ENCODE measurements at regions of chrX and their contacts with region 1.

Region 1: GRCh38 chrX:42017971-42018370 is 94.6 kb upstream of the CASK start:
- DNase-seq: no peak
- H3K4me3 ChIP-seq: no peak overlapping the region
- H3K4me3 Mint-ChIP-seq: no peak overlapping the region
- H3K27ac Mint-ChIP-seq: no peak overlapping the region
- H3K4me1 ChIP-seq: peaks cover 28% of the 10 kb centered on the region
- H3K4me1 Mint-ChIP-seq: peaks cover 11% of the 10 kb centered on the region
- H3K27me3 ChIP-seq: no peaks in the 10 kb centered on the region
- H3K27me3 Mint-ChIP-seq: no peaks in the 10 kb centered on the region
- CTCF ChIP-seq: no peak

Region 2: DNA sequence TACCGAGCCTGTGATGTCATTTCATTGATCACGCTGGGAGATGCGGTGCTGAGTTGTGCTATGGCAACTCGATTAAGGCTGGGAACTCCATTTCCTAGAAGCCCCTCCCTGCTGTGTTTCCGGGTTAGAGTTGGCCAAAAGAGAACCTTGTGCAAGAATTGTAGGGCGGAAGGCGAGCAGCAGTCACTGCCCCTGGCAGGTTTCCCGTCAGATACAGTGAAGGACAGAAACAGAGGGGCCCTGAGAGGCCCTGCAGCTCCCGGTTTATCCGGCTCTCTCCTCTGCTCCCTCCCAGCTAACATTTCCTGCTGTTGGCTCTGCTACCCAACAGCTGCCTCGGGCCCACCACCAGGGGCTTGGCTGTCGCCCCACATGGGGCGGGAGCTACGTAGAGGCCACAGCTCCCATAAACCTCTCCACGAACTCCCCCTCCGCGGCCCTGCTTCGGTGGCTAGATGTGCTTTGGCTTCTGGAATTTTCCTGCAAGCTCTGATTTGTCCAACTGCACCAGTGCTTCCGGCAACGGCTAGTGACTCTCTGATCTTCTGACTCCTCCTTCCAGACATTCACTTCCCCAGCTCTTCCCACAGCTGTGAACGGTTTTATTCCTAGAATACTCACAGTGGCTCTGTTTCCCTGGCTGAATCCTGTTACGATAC is 1007.7 kb before region 1 on chrX:
- CTCF ChIA-PET with region 1: no interaction called
- POLR2A ChIA-PET with region 1: no interaction called
- intact Hi-C with region 1: no loop called
- DNase-seq: no peak
- H3K4me3 ChIP-seq: no peak overlapping the region
- H3K4me3 Mint-ChIP-seq: no peak overlapping the region
- H3K27ac Mint-ChIP-seq: no peak overlapping the region
- H3K4me1 ChIP-seq: no peaks in the 10 kb centered on the region
- H3K4me1 Mint-ChIP-seq: no peaks in the 10 kb centered on the region
- H3K27me3 ChIP-seq: no peaks in the 10 kb centered on the region
- H3K27me3 Mint-ChIP-seq: no peaks in the 10 kb centered on the region
- CTCF ChIP-seq: no peak

Region 3: GRCh38 chrX:42096265-42096920 is 78.4 kb after region 1 on chrX:
- CTCF ChIA-PET with region 1: no interaction called
- POLR2A ChIA-PET with region 1: no interaction called
- intact Hi-C with region 1: loop called (anchors 5 kb)
- DNase-seq: peak; percentile 82 to 92
- H3K4me3 ChIP-seq: no peak overlapping the region
- H3K4me3 Mint-ChIP-seq: peak overlapping the region; percentile 59
- H3K27ac Mint-ChIP-seq: peak overlapping the region; percentile 92
- H3K4me1 ChIP-seq: peaks cover 48% of the 10 kb centered on the region
- H3K4me1 Mint-ChIP-seq: peaks cover 31% of the 10 kb centered on the region
- H3K27me3 ChIP-seq: no peaks in the 10 kb centered on the region
- H3K27me3 Mint-ChIP-seq: no peaks in the 10 kb centered on the region
- CTCF ChIP-seq: no peak